Activated naive CD4-positive, alpha-beta T cell treated with anti-CD3 and anti-CD28 coated beads for 36 hours (primary cell): ENCODE measurements at regions of chr20 and their contacts with region 1.

Region 1: DNA sequence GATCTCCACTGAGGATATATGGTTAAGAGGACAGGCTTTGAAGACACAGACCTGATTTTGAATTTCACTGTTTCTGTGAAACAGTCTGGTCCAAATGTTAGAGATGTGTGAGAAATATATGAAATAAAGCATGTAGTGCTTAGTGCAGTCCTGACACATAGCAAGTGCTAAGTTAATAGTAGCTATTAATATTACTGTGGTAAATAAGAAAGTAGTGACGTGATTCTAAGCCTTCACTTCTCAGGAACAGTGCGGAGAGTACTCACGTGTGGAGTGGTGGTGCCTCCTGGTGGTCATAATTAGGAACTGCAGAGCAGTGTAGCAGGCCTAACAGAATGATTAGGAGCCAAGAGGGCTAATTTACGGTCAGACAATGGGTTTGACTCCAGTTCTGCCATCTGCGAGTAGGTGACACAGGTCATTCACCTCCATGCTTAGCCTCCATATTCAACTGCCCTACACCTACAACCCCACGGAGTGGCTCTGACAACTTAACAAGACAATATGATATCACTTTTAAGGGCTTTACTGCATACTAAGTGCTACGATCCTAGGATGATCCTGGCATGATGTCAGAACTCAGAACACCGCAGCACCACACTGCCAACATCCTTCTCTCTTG is 106.2 kb downstream of the JPH2 start:
- DNase-seq: peak; percentile 88
- H3K4me3 Mint-ChIP-seq: no peak overlapping the region
- H3K27ac Mint-ChIP-seq: no peak overlapping the region
- H3K4me1 Mint-ChIP-seq: peaks cover 13% of the 10 kb centered on the region
- H3K27me3 Mint-ChIP-seq: no peaks in the 10 kb centered on the region

Region 2: GRCh38 chr20:43448748-43449535 is 631.8 kb before region 1 on chr20:
- CTCF ChIA-PET with region 1: no interaction called
- intact Hi-C with region 1: loop called (anchors 1 kb)
- DNase-seq: peak; percentile 66
- H3K4me3 Mint-ChIP-seq: no peak overlapping the region
- H3K27ac Mint-ChIP-seq: no peak overlapping the region
- H3K4me1 Mint-ChIP-seq: no peaks in the 10 kb centered on the region
- H3K27me3 Mint-ChIP-seq: peaks cover 17% of the 10 kb centered on the region

Region 3: DNA sequence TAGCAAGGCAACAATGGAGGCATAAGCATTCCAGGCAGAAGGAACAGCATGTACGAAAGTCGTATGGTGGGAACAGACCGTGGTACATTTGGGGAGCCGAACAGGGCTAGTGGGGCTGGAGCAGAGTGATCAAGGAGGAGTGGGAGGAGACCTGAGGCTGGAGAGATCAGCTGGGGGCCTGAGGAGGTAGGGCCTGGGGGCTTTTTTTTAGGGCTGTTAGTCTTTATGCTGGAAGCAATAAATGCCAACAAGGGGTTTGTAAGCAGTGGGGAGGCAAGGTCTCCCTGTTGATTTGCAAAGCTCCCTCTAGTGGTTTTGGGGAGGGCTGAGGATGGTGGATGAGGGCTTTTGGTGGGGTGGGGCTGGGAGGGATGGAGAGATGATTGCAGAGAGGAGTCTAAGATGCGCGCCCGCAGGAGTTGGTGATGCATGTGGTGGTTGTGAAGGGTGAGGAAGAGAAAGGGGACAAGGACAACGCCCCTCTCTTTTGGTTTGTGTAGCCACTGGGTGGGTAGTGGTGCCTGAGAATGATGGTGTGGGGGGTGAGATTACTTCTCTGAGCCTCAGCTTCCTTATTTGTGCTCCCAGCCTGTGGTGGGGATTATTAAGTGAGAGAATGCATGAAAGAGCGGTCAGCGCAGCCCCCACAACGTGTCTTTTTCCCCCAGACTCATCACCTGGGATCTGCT is 240.2 kb before region 1 on chr20:
- CTCF ChIA-PET with region 1: interaction called, 3 read pairs
- intact Hi-C with region 1: loop called (anchors 1 kb)
- DNase-seq: peak; percentile 60
- H3K4me3 Mint-ChIP-seq: no peak overlapping the region
- H3K27ac Mint-ChIP-seq: no peak overlapping the region
- H3K4me1 Mint-ChIP-seq: peaks cover 16% of the 10 kb centered on the region
- H3K27me3 Mint-ChIP-seq: no peaks in the 10 kb centered on the region

Region 4: DNA sequence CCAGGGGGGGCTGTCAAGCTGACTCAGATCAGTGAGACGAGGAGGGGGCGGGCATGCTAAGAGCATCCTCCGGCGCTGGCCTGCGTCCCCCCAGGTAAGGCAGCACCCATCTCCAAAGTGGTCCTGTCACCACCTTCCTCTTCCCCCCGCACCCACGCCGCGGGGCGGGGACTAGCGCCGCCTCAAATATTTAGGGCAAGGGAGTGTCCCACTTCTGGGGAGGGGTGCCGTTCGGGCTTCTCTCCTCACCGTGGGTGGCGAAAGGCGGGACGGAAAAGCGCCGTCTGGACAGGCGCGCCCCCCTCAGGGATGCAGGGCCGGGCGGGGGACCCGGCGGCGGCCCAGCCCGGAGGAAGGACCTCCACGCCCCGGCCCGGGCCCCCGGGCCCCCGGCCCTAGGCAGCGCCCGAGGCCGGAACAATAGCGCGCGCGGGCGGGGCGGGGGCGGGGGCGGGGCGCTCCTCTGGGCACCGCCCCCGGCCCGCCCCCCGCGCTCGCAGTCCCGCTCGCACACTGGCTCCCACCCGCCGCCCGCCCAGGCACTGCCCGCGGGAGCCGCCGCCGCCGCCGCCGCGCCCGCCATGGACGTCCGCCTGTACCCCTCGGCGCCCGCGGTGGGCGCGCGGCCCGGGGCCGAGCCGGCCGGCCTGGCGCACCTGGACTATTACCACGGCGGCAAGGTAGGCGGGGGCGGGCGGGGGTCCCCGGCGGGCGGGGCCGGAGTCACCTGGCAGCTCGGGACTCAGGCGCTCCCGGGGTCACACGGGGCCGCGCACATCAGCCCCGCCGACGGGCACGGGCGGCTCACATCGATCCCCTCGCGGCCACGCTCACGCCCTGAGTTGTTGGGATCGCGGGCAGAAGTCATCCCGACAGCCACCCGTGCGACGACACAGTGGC is 166.2 kb before region 1 on chr20 and contains the start of gene TOX2:
- CTCF ChIA-PET with region 1: no interaction called
- intact Hi-C with region 1: no loop called
- DNase-seq: peak; percentile 39
- H3K4me3 Mint-ChIP-seq: peak within 1 kb of the TSS; percentile 73
- H3K27ac Mint-ChIP-seq: no peak within 1 kb of the TSS
- H3K4me1 Mint-ChIP-seq: peaks cover 32% of the 10 kb centered on the region
- H3K27me3 Mint-ChIP-seq: peaks cover 43% of the 10 kb centered on the region
- total RNA-seq, gene TOX2: 1.2 to 1.6 TPM

Region 5: DNA sequence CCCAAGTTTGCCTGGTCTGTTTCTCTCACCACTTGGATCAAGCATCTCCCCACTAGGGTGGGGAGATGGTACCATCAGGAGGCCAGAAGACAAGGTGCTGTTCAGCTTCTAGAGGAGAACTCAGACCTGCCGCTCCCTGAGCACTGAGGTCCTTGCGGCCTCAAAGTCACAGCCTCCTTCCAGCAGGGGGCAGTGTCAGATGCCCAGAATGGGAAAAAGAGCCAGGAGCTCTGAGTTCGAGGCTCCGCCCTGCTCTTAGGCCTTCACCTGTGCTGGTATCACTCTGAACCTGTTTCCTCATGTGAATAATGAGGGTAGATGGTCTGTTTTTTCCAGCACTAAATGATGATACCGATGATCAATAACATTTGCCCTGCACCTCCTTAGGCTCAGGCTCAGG is 97.4 kb before region 1 on chr20:
- CTCF ChIA-PET with region 1: interaction called, 19 read pairs
- intact Hi-C with region 1: loop called (anchors 1 kb)
- DNase-seq: peak; percentile 71
- H3K4me3 Mint-ChIP-seq: no peak overlapping the region
- H3K27ac Mint-ChIP-seq: no peak overlapping the region
- H3K4me1 Mint-ChIP-seq: peaks cover 12% of the 10 kb centered on the region
- H3K27me3 Mint-ChIP-seq: no peaks in the 10 kb centered on the region

Region 6: GRCh38 chr20:44069203-44070011 is 11.3 kb before region 1 on chr20:
- CTCF ChIA-PET with region 1: interaction called, 10 read pairs
- intact Hi-C with region 1: no loop called
- DNase-seq: peak; percentile 79
- H3K4me3 Mint-ChIP-seq: peak overlapping the region; percentile 72
- H3K27ac Mint-ChIP-seq: peak overlapping the region; percentile 90
- H3K4me1 Mint-ChIP-seq: peaks cover 66% of the 10 kb centered on the region
- H3K27me3 Mint-ChIP-seq: no peaks in the 10 kb centered on the region

Region 7: DNA sequence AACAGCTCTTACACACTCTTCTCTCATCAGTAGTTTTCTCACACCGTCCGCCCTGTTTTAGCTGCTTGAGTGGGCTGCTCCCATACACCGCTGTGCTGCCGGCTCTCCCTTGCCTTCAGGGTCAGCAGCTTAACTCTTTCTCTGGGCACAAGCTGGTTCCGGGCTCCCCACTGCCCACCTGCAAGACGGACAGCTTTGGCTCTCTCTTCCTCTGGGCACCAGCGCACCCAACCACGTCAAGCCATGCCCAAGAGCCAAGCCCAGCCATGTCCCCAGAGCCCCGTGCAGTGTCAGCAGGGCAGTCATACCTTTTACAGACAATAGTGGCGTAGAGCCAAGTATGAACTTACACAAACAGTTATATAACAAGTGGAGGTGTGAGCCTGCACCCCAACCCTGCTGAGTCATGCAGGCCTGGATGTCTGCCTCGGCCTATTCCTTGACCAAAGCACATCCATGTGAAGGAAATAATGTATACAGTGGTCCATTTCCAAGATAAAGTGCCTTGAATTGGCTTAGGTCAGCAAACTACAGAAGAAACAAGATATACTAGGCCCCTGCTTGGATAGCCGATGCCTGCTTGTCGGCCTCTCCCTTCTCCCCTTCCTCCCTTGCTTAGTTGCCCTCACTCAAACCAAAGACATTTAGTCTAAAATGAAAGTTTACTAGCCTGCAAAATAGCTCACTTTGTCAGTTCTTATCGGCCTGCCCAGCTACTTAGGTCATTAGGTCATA is 16.9 kb after region 1 on chr20:
- CTCF ChIA-PET with region 1: no interaction called
- intact Hi-C with region 1: no loop called
- DNase-seq: no peak
- H3K4me3 Mint-ChIP-seq: no peak overlapping the region
- H3K27ac Mint-ChIP-seq: no peak overlapping the region
- H3K4me1 Mint-ChIP-seq: no peaks in the 10 kb centered on the region
- H3K27me3 Mint-ChIP-seq: peaks cover 18% of the 10 kb centered on the region